BJ (cell line): ENCODE measurements at regions of chr18 and their contacts with region 1.

Region 1: GRCh38 chr18:59249205-59249774 is 24.0 kb downstream of the RAX start:
- DNase-seq: peak; percentile 47
- H3K4me3 ChIP-seq: no peak overlapping the region
- H3K27me3 ChIP-seq: peaks cover 5% of the 10 kb centered on the region; the same call in 1 of the 2 replicates
- CTCF ChIP-seq: peak; percentile 83

Region 2: GRCh38 chr18:59265246-59265973 is 16.1 kb after region 1 on chr18:
- CTCF ChIA-PET with region 1: interaction called, 10 read pairs
- POLR2A ChIA-PET with region 1: no interaction called
- DNase-seq: no peak
- H3K4me3 ChIP-seq: peak overlapping the region; percentile 39
- H3K27me3 ChIP-seq: peaks cover 55% of the 10 kb centered on the region
- CTCF ChIP-seq: no peak

Region 3: GRCh38 chr18:59300676-59301285 is 51.5 kb after region 1 on chr18:
- CTCF ChIA-PET with region 1: interaction called, 10 read pairs
- POLR2A ChIA-PET with region 1: no interaction called
- DNase-seq: no peak
- H3K4me3 ChIP-seq: no peak overlapping the region
- H3K27me3 ChIP-seq: peaks cover 22% of the 10 kb centered on the region
- CTCF ChIP-seq: no peak